Activated CD4-positive, alpha-beta memory T cell treated with anti-CD3 and anti-CD28 coated beads, Interleukin-2, amount 10 ng/mL, durations not matched to agents 7 days and 5 days (primary cell): ENCODE measurements at regions of chr1 and their contacts with region 1.

Region 1: GRCh38 chr1:15304701-15305467 is 57.9 kb downstream of the FHAD1 start:
- DNase-seq: peak; percentile 67
- H3K4me3 Mint-ChIP-seq: no peak overlapping the region
- H3K27ac Mint-ChIP-seq: no peak overlapping the region
- H3K4me1 Mint-ChIP-seq: no peaks in the 10 kb centered on the region
- H3K27me3 Mint-ChIP-seq: peaks cover 12% of the 10 kb centered on the region

Region 2: DNA sequence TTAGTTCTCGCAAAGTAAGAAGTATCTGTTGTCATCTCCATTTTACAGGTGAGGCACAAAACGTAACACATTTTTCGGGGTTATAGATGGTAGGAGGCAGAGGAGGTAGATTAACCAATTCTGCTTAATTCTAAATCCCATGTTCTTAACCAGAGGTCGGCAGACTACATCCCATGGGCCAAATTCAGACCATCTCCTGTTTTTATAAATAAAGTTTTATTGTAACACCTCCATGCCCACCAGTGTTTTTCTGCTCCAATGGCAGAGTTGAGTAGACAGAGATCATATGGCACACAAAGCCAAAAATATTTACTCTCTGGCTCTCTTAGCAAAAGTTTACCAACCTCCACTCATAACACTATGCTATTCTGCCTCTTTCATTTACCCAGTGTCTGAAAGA is 27.0 kb before region 1 on chr1:
- CTCF ChIA-PET with region 1: no interaction called
- POLR2A ChIA-PET with region 1: no interaction called
- DNase-seq: no peak
- H3K4me3 Mint-ChIP-seq: no peak overlapping the region
- H3K27ac Mint-ChIP-seq: no peak overlapping the region
- H3K4me1 Mint-ChIP-seq: no peaks in the 10 kb centered on the region
- H3K27me3 Mint-ChIP-seq: peaks cover 28% of the 10 kb centered on the region

Region 3: GRCh38 chr1:15290382-15290781 is 14.5 kb before region 1 on chr1:
- CTCF ChIA-PET with region 1: interaction called, 13 read pairs
- POLR2A ChIA-PET with region 1: no interaction called
- DNase-seq: no peak
- H3K4me3 Mint-ChIP-seq: no peak overlapping the region
- H3K27ac Mint-ChIP-seq: no peak overlapping the region
- H3K4me1 Mint-ChIP-seq: peaks cover 4% of the 10 kb centered on the region
- H3K27me3 Mint-ChIP-seq: peaks cover 10% of the 10 kb centered on the region